WTC11 (cell line): ENCODE measurements at regions of chr7 and their contacts with region 1.

Region 1: DNA sequence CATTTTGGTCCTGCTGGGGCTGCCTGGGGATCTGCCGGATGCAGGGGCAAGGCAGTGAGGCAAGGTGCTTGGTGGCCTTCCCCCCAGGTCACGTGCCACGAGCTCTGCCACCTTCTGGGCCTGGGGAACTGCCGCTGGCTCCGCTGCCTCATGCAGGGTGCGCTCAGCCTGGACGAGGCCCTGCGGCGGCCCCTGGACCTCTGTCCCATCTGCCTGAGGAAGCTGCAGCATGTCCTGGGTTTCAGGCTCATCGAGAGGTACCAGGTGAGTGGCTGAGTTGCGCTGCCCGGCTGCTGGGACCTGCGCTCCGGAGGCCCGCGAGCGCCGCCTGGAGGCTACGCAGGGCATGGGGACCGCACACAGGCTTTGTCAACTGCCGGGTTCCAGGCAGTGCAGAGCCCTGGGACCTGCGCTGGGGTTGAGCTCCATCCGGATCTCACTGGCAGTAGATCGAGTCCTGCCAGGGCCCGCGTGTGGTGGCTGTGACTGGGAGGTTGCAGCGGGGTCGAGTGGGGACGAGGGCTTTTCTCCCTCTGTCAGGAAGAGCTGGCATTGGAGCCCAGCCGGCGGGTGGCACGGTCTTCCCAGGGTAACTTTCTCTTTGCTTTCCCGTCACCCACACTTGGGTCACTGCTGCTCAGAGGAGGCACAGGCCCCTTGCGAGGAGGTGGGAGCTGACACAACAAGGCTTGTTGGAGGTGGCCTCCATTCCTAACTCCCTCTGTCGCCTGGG is 21.7 kb downstream of the AMZ1 start:
- DNase-seq: peak; percentile 91
- ATAC-seq: peak; percentile 94
- H3K4me3 Mint-ChIP-seq: no peak overlapping the region
- H3K27ac Mint-ChIP-seq: no peak overlapping the region
- H3K4me1 Mint-ChIP-seq: peaks cover 8% of the 10 kb centered on the region
- H3K27me3 Mint-ChIP-seq: no peaks in the 10 kb centered on the region
- CTCF ChIP-seq: peak; percentile 93

Region 2: GRCh38 chr7:2585446-2585845 is 124.3 kb before region 1 on chr7:
- CTCF ChIA-PET with region 1: interaction called, 11 read pairs
- POLR2A ChIA-PET with region 1: no interaction called
- DNase-seq: no peak
- ATAC-seq: no peak
- H3K4me3 Mint-ChIP-seq: no peak overlapping the region
- H3K27ac Mint-ChIP-seq: peak overlapping the region; percentile 85
- H3K4me1 Mint-ChIP-seq: peaks cover 16% of the 10 kb centered on the region
- H3K27me3 Mint-ChIP-seq: no peaks in the 10 kb centered on the region
- CTCF ChIP-seq: no peak

Region 3: GRCh38 chr7:2641406-2642393 is 68.0 kb before region 1 on chr7:
- CTCF ChIA-PET with region 1: interaction called, 10 read pairs
- POLR2A ChIA-PET with region 1: no interaction called
- DNase-seq: peak; percentile 88
- ATAC-seq: peak; percentile 60
- H3K4me3 Mint-ChIP-seq: 0 out of 2 replicates have a peak overlapping the region, but pooled peaks have one; percentile 20
- H3K27ac Mint-ChIP-seq: peak overlapping the region; percentile 92
- H3K4me1 Mint-ChIP-seq: peaks cover 35% of the 10 kb centered on the region
- H3K27me3 Mint-ChIP-seq: no peaks in the 10 kb centered on the region
- CTCF ChIP-seq: no peak

Region 4: DNA sequence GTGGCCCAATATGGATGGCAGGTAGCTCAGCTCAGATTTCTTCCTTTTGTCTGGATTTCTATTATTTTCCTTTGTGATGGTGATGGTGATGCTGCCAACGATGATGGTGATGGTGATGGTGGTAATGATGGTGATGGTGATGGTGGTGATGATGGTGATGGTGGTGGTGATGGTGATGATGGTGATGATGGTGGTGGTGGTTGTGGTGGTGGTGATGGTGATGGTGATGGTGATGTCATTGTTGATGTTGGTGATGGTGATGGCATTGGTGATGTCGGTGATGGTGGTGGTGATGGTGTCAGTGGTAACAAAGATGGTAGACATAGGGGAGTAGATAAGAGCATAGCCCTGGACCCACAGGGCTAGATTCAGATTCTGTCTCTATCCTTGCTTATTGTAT is 52.5 kb before region 1 on chr7:
- CTCF ChIA-PET with region 1: no interaction called
- POLR2A ChIA-PET with region 1: no interaction called
- DNase-seq: no peak
- ATAC-seq: no peak
- H3K4me3 Mint-ChIP-seq: no peak overlapping the region
- H3K27ac Mint-ChIP-seq: peak overlapping the region; percentile 84
- H3K4me1 Mint-ChIP-seq: no peaks in the 10 kb centered on the region
- H3K27me3 Mint-ChIP-seq: no peaks in the 10 kb centered on the region
- CTCF ChIP-seq: no peak

Region 5: GRCh38 chr7:2688409-2689331 is 21.0 kb before region 1 on chr7:
- CTCF ChIA-PET with region 1: interaction called, 102 read pairs
- POLR2A ChIA-PET with region 1: no interaction called
- DNase-seq: peak; percentile 53
- ATAC-seq: peak; percentile 73
- H3K4me3 Mint-ChIP-seq: peak overlapping the region; percentile 61
- H3K27ac Mint-ChIP-seq: no peak overlapping the region
- H3K4me1 Mint-ChIP-seq: peaks cover 12% of the 10 kb centered on the region
- H3K27me3 Mint-ChIP-seq: peaks cover 32% of the 10 kb centered on the region
- CTCF ChIP-seq: no peak

Region 6: GRCh38 chr7:2732959-2733584 is 23.4 kb after region 1 on chr7:
- CTCF ChIA-PET with region 1: interaction called, 13 read pairs
- POLR2A ChIA-PET with region 1: no interaction called
- DNase-seq: peak; percentile 9
- ATAC-seq: no peak
- H3K4me3 Mint-ChIP-seq: no peak overlapping the region
- H3K27ac Mint-ChIP-seq: peak overlapping the region; percentile 91
- H3K4me1 Mint-ChIP-seq: peaks cover 39% of the 10 kb centered on the region
- H3K27me3 Mint-ChIP-seq: no peaks in the 10 kb centered on the region
- CTCF ChIP-seq: no peak